Activated CD4-positive, alpha-beta memory T cell treated with anti-CD3 and anti-CD28 coated beads, Interleukin-2, amount 10 ng/mL, durations not matched to agents 7 days and 5 days (primary cell): ENCODE measurements at regions of chr3 and their contacts with region 1.

Region 1: GRCh38 chr3:188954590-188955208 is 217.1 kb upstream of the TPRG1 start:
- DNase-seq: peak; percentile 82
- H3K4me3 Mint-ChIP-seq: no peak overlapping the region
- H3K27ac Mint-ChIP-seq: no peak overlapping the region
- H3K4me1 Mint-ChIP-seq: peaks cover 11% of the 10 kb centered on the region
- H3K27me3 Mint-ChIP-seq: peaks cover 2% of the 10 kb centered on the region

Region 2: DNA sequence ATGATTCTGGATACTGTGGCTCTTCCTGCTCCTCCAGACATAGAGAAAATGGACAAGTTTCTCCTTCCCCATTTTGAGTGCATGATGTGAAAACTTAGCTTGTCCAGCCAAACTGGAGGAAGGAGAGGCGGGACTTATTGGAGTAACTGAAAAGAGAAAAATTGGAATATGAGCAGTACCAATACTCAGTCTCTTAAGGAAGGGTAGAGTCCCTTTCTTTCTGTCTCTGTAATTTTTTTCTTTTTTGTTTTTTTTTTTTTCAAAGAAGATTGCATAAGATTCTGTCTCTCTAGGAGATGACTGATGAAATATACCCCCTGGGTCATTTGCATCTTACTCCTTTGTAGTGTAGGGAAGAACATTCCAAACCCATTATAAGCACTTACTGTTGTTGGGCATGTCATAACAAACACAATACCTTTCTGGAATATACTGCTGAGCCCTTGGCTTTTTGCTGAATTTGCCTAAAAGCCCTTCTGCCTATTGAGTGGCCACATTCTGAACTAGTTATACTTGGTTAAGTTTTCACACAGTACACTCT is 281.0 kb before region 1 on chr3:
- CTCF ChIA-PET with region 1: no interaction called
- POLR2A ChIA-PET with region 1: no interaction called
- DNase-seq: no peak
- H3K4me3 Mint-ChIP-seq: no peak overlapping the region
- H3K27ac Mint-ChIP-seq: no peak overlapping the region
- H3K4me1 Mint-ChIP-seq: no peaks in the 10 kb centered on the region
- H3K27me3 Mint-ChIP-seq: no peaks in the 10 kb centered on the region

Region 3: DNA sequence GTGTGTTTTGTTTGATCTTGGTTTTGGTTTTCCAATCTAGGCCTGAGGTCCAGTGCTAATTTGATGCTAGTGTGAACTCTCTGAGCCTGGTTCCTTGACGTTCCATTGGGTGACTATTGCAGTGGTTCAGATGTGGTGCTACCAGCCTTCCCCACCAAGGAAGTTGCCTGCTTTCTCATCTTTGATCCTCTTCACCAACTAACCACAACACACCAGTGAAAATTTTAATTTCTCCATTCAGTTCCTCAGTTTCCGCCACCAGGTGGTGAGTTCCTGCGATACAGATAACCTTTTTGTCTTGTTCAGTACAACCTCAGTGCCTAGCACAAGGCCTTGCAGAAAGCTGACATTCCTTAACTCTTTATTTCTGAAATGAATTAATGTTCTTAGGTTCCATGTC is 120.3 kb before region 1 on chr3:
- CTCF ChIA-PET with region 1: interaction called, 10 read pairs
- POLR2A ChIA-PET with region 1: no interaction called
- DNase-seq: peak; percentile 17
- H3K4me3 Mint-ChIP-seq: no peak overlapping the region
- H3K27ac Mint-ChIP-seq: no peak overlapping the region
- H3K4me1 Mint-ChIP-seq: peaks cover 3% of the 10 kb centered on the region
- H3K27me3 Mint-ChIP-seq: no peaks in the 10 kb centered on the region

Region 4: DNA sequence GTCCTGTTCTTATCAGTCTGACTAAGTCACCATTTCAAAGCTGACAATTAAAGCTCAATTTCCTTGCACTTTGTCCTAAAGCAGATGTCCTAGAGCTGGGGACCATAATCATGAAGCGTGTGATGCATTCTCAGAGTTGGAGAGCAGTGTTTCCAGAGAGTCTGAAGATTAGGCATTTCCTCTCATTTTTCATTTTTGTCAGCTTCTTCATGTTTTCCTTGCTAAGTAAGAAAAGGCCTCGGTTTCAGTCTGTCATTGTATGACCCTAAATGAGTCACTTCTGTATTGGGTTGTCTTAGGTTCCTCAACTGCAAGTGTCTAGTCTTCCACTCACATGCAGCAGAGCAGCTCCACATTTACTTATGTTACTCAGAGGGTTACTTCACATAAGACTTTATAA is 40.1 kb before region 1 on chr3:
- CTCF ChIA-PET with region 1: interaction called, 15 read pairs
- POLR2A ChIA-PET with region 1: interaction called, 3 read pairs
- DNase-seq: no peak
- H3K4me3 Mint-ChIP-seq: no peak overlapping the region
- H3K27ac Mint-ChIP-seq: peak overlapping the region; percentile 17
- H3K4me1 Mint-ChIP-seq: peaks cover 41% of the 10 kb centered on the region
- H3K27me3 Mint-ChIP-seq: peaks cover 2% of the 10 kb centered on the region

Region 5: GRCh38 chr3:189041482-189042090 is 86.9 kb after region 1 on chr3:
- CTCF ChIA-PET with region 1: interaction called, 41 read pairs
- POLR2A ChIA-PET with region 1: no interaction called
- DNase-seq: peak; percentile 78
- H3K4me3 Mint-ChIP-seq: no peak overlapping the region
- H3K27ac Mint-ChIP-seq: peak overlapping the region; percentile 49
- H3K4me1 Mint-ChIP-seq: peaks cover 46% of the 10 kb centered on the region
- H3K27me3 Mint-ChIP-seq: no peaks in the 10 kb centered on the region

Region 6: DNA sequence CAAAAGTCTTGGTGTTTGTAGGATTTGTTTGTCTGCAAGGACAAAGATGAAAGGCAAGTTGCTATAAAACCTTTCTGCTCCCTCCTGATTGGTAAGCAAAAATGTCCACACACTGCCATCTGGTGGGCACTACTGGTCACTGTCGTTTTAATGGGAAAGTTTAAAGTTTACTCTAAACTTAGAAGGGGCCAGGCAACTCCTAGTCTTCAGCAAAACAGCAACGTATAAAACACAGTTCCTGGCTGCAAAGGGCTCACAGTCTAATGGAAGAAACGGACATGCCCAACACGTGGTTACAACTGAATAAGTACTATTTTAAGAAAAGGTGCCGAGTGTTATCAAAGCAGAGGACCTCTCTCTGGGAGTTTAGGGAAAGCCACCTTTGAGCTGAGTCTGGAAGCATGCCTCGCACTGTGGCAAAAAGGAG is 193.4 kb after region 1 on chr3:
- CTCF ChIA-PET with region 1: interaction called, 76 read pairs
- POLR2A ChIA-PET with region 1: interaction called, 6 read pairs
- DNase-seq: peak; percentile 75
- H3K4me3 Mint-ChIP-seq: no peak overlapping the region
- H3K27ac Mint-ChIP-seq: no peak overlapping the region
- H3K4me1 Mint-ChIP-seq: peaks cover 42% of the 10 kb centered on the region
- H3K27me3 Mint-ChIP-seq: no peaks in the 10 kb centered on the region

Region 7: GRCh38 chr3:189288348-189289235 is 333.9 kb after region 1 on chr3:
- CTCF ChIA-PET with region 1: no interaction called
- POLR2A ChIA-PET with region 1: no interaction called
- DNase-seq: no peak
- H3K4me3 Mint-ChIP-seq: no peak overlapping the region
- H3K27ac Mint-ChIP-seq: peak overlapping the region; percentile 45
- H3K4me1 Mint-ChIP-seq: peaks cover 32% of the 10 kb centered on the region
- H3K27me3 Mint-ChIP-seq: no peaks in the 10 kb centered on the region

Region 8: DNA sequence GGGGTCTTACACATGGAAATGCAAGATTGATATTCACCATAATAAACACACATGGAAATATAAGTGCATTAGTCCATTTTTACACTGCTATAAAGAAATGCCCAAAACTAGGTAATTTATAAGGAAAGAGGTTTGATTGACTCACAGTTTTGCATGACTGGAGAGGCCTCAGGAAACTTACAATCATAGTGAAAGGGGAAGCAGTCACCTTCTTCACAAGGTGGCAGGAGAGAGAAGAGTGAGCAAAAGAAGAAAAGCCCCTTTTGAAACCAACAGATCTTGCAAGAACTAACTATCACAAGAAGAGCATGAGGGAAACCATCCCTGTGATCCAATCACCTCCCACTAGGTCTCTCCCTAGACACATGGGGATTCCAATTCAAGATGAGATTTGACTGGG is 564.8 kb after region 1 on chr3:
- CTCF ChIA-PET with region 1: no interaction called
- POLR2A ChIA-PET with region 1: no interaction called
- DNase-seq: no peak
- H3K4me3 Mint-ChIP-seq: no peak overlapping the region
- H3K27ac Mint-ChIP-seq: no peak overlapping the region
- H3K4me1 Mint-ChIP-seq: no peaks in the 10 kb centered on the region
- H3K27me3 Mint-ChIP-seq: peaks cover 2% of the 10 kb centered on the region